Naive thymus-derived CD4-positive, alpha-beta T cell (primary cell): ENCODE measurements at regions of chr2 and their contacts with region 1.

Region 1: GRCh38 chr2:202375609-202376408 is at the start of gene BMPR2:
- DNase-seq: peak; percentile 68 to 94 (median 81)
- ATAC-seq: peak; percentile 90
- H3K4me3 ChIP-seq: peak within 1 kb of the TSS; percentile 95
- H3K4me3 Mint-ChIP-seq: peak within 1 kb of the TSS; percentile 94 to 100 (median 98)
- H3K27ac ChIP-seq: peak within 1 kb of the TSS; percentile 81
- H3K27ac Mint-ChIP-seq: peak within 1 kb of the TSS; percentile 82 to 98 (median 92)
- H3K4me1 ChIP-seq: peaks cover 0 to 3% of the 10 kb centered on the region in 2 donors
- H3K4me1 Mint-ChIP-seq: peaks cover 13 to 41% (median 29%) of the 10 kb centered on the region in 7 donors
- H3K27me3 ChIP-seq: no peaks in the 10 kb centered on the region
- H3K27me3 Mint-ChIP-seq: peaks cover 0 to 28% (median 0%) of the 10 kb centered on the region in 5 donors
- total RNA-seq, gene BMPR2: 8.0 to 33.1 (median 15.2) TPM

Region 2: DNA sequence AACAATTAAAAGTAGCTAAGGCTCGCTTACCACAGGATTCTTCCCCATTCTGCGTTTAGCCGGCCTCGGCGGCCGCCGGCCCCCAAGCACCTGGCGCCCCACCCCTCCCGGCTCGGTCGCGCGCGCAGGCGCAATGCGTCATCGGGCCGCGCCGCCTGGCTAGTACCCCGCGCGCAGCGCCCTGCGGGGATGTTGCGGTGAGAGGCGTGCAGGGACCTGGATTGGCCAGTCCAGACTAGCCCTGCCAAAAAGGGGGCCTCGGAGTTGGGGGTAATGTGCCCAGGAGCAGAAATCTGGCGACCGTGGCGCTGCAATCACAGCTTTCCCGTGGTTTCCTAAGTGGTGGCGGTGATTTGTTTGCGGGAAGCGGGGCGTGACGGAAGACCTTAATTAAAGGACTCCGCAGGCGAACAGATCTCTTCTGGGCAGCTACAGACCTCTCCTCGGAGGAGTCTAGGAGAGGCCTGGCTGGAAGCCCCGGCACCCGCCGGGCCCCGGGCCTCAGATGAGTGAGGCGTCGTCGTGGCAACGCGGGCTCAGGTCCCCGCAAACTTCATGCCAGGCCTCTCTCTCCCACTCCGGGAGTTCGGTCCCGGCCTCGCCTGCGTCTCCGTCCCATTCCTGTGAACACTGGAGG is 733.1 kb before region 1 on chr2:
- CTCF ChIA-PET with region 1: no interaction called
- POLR2A ChIA-PET with region 1: no interaction called
- intact Hi-C with region 1: loop called in 1 of 2 experiments (anchors 5 kb)
- DNase-seq: peak; percentile 81 to 94 (median 92)
- ATAC-seq: peak; percentile 94
- H3K4me3 ChIP-seq: peak overlapping the region; percentile 95
- H3K4me3 Mint-ChIP-seq: peak overlapping the region; percentile 86 to 99 (median 96)
- H3K27ac ChIP-seq: peak overlapping the region; percentile 87
- H3K27ac Mint-ChIP-seq: peak overlapping the region; percentile 76 to 100 (median 97)
- H3K4me1 ChIP-seq: peaks cover 3 to 5% of the 10 kb centered on the region in 2 donors
- H3K4me1 Mint-ChIP-seq: peaks cover 5 to 21% (median 12%) of the 10 kb centered on the region in 7 donors
- H3K27me3 ChIP-seq: no peaks in the 10 kb centered on the region
- H3K27me3 Mint-ChIP-seq: peaks cover 0 to 4% (median 0%) of the 10 kb centered on the region in 5 donors

Region 3: DNA sequence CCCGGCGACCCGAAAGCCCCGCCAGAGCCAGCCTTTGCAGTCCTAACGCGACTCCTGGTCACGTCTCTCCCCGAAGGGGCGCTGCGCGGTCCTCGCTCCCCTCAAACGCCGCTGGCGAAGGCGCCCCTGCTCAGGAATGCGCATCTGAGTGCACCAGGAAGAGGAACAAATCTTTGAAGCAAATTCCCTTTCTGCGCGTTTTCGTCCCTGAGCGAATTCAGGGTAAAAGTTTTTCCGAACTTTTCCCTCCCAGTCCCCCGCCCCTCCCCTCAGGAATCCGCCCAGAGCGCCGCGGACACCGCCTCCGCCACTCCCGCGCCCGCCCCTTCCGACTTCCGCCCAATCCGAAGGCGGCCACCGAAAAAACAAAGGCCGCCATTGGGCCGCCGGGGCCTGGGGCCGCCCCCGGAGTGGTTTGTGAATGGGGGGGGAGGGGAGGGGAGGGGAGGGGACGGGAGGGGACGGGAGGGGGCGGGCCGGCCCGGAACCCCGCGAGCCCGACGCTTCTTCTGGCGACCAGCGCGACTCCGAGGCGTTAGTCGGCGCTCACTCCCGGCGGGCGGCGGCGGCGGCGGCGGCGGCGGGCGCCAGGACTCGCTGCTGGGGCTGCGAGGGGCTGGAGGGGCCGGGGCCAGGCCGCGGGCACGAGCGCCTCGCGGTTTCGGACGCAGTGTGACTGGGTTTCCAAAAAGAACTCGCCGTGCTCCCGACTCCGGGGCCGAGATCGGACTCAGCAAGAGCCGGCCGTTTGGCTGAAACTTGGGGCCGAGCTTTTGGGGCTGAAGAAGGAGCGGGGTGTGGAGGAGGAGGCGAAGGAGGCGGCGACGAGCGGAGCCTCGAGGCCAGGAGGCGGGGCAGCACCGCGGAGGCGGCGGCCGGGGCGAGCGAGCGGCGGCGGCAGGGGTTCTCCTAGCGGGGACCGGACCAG is 342.2 kb before region 1 on chr2 and contains the start of gene FZD7:
- CTCF ChIA-PET with region 1: no interaction called
- POLR2A ChIA-PET with region 1: no interaction called
- intact Hi-C with region 1: loop called in 1 of 2 experiments (anchors 5 kb)
- DNase-seq: peak; percentile 70 to 87 (median 81)
- ATAC-seq: peak; percentile 92
- H3K4me3 ChIP-seq: peak within 1 kb of the TSS; percentile 91
- H3K4me3 Mint-ChIP-seq: peak within 1 kb of the TSS in 9 of 10 donors; percentile 87 to 96 (median 92)
- H3K27ac ChIP-seq: peak within 1 kb of the TSS; percentile 44
- H3K27ac Mint-ChIP-seq: peak within 1 kb of the TSS in 8 of 9 donors; percentile 46 to 83 (median 72)
- H3K4me1 ChIP-seq: peaks cover 9 to 11% of the 10 kb centered on the region in 2 donors
- H3K4me1 Mint-ChIP-seq: peaks cover 6 to 17% (median 14%) of the 10 kb centered on the region in 7 donors
- H3K27me3 ChIP-seq: peaks cover 6 to 22% of the 10 kb centered on the region in 2 donors
- H3K27me3 Mint-ChIP-seq: peaks cover 0 to 45% (median 7%) of the 10 kb centered on the region in 5 donors
- total RNA-seq, gene FZD7: 0.27 to 0.99 (median 0.43) TPM

Region 4: DNA sequence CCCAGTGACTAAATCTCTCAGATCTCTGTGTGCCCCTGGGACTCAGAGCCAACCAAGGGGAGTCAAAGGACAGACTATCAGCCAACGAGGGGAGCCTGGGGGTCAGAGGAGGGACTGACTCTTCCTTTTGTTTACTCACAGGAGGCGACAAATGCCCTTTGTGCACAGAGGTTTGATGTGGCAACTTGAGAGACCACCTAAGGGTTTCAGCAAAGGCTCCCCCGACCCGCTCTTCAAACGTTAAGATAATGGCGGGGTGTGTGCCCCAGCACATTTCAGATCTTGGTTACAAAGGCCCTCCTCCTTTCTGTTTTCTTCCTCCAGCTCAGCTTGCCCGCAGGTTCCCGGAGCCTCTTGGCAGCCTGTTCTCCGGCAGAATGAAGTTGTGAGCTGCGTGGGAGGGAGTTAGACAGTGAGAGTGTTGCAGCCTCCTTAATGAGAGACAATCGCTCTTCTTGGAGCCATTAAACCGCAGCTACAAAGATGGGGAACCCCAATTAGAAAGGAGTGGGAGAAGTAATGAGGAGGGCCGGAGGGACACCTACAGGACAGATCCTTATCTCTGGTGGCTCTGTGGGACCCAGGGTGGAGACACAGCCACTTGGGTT is 226.6 kb before region 1 on chr2:
- CTCF ChIA-PET with region 1: no interaction called
- POLR2A ChIA-PET with region 1: no interaction called
- intact Hi-C with region 1: no loop called
- DNase-seq: no peak
- ATAC-seq: no peak
- H3K4me3 ChIP-seq: no peak overlapping the region
- H3K4me3 Mint-ChIP-seq: no peak overlapping the region
- H3K27ac ChIP-seq: no peak overlapping the region
- H3K27ac Mint-ChIP-seq: peak overlapping the region in 1 of 9 donors; percentile 37
- H3K4me1 ChIP-seq: no peaks in the 10 kb centered on the region
- H3K4me1 Mint-ChIP-seq: peaks cover 0 to 4% (median 0%) of the 10 kb centered on the region in 7 donors
- H3K27me3 ChIP-seq: no peaks in the 10 kb centered on the region
- H3K27me3 Mint-ChIP-seq: peaks cover 4 to 33% (median 11%) of the 10 kb centered on the region in 5 donors

Region 5: DNA sequence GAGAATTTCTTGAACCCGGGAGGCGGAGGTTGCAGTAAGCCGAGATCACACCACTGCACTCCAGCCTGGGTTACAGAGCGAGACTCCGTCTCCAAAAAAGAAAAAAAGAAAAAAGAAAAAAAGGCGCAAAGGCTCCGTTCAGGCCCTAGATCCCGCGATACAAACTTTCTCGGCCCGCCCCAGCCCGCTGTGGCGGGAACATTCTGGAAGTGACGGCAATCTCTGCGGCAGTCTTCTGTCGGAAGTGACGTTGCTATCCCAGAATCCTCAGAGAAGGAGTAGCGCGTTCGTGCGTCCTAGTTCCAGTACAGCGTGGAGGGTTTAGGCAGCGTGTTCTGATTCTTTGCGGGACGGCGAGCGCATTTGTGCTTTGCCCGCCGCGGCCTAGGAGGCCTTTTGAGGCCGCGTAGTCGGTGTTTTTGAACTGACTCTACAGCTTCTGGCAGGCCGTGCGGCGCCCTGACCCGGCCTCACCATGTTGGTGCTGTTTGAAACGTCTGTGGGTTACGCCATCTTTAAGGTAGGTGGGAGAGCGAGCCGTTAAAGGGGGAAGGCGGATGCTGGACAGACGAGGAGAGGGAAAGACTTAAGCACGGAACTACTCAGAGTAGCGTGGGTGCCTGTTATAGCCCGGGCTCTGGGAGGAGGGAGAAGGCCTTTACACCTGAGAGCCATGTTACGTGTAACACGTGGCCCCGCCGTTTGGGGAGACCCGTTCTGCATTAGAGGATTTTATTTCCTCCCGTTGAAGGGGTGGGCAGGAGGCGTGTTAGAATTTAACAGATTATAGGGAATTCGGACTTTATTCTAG is 110.1 kb before region 1 on chr2 and contains the start of gene NOP58:
- CTCF ChIA-PET with region 1: no interaction called
- POLR2A ChIA-PET with region 1: interaction called, 3 read pairs
- intact Hi-C with region 1: loop called (anchors 1 kb)
- DNase-seq: peak; percentile 69 to 96 (median 93)
- ATAC-seq: peak; percentile 90
- H3K4me3 ChIP-seq: peak within 1 kb of the TSS; percentile 93
- H3K4me3 Mint-ChIP-seq: peak within 1 kb of the TSS in 9 of 10 donors; percentile 53 to 71 (median 64)
- H3K27ac ChIP-seq: peak within 1 kb of the TSS; percentile 92
- H3K27ac Mint-ChIP-seq: peak within 1 kb of the TSS in 6 of 9 donors; percentile 4 to 83 (median 76)
- H3K4me1 ChIP-seq: peaks cover 17 to 34% of the 10 kb centered on the region in 2 donors
- H3K4me1 Mint-ChIP-seq: peaks cover 11 to 27% (median 21%) of the 10 kb centered on the region in 7 donors
- H3K27me3 ChIP-seq: no peaks in the 10 kb centered on the region
- H3K27me3 Mint-ChIP-seq: no peaks in the 10 kb centered on the region
- total RNA-seq, gene NOP58: 105 to 259 (median 110) TPM

Region 6: DNA sequence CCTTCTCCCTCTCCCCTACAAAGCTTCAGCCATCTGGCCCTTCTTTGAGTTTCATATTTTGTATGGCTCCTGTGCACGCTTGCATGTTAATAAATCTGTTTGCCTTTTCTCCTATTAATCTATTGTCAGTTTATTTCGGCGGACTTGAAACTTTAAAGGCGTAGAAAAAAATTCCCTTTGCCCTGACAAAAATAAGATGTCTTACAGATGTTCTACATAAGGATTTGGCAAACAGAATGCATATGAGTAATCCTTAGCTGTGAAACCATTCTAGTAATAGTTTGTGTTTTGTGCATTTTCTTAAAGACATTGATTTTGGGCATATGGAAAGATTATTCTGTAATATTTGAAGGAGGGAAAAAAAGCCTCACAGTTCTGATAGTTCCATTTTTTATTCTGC is 14.7 kb before region 1 on chr2:
- CTCF ChIA-PET with region 1: no interaction called
- POLR2A ChIA-PET with region 1: no interaction called
- intact Hi-C with region 1: no loop called
- DNase-seq: no peak
- ATAC-seq: no peak
- H3K4me3 ChIP-seq: no peak overlapping the region
- H3K4me3 Mint-ChIP-seq: no peak overlapping the region
- H3K27ac ChIP-seq: no peak overlapping the region
- H3K27ac Mint-ChIP-seq: peak overlapping the region in 2 of 9 donors; percentile 5 to 41
- H3K4me1 ChIP-seq: no peaks in the 10 kb centered on the region
- H3K4me1 Mint-ChIP-seq: no peaks in the 10 kb centered on the region
- H3K27me3 ChIP-seq: no peaks in the 10 kb centered on the region
- H3K27me3 Mint-ChIP-seq: peaks cover 0 to 2% (median 0%) of the 10 kb centered on the region in 5 donors

Region 7: DNA sequence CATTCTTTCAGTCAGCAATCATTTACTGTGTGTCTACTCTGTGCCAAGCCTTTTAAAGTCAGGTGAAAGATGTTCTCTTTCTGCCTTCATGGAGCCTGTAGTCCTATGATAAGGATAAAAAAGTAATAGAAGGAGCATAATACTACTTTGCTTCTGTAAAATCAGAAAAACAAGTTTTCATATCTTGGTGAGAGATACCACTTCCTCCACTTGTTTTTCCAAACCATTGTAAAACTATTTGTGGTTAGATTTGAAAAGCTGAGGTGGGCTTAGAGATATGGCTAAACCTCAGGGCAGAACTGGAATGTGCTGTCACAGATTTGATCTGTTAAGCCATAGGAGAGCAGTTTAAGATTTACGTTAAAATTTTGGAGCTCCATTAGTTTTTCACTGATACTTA is 154.2 kb after region 1 on chr2:
- CTCF ChIA-PET with region 1: no interaction called
- POLR2A ChIA-PET with region 1: interaction called, 3 read pairs
- intact Hi-C with region 1: loop called in 1 of 2 experiments (anchors 1 kb)
- DNase-seq: peak in 4 of 9 donors; percentile 16 to 35 (median 24)
- ATAC-seq: no peak
- H3K4me3 ChIP-seq: no peak overlapping the region
- H3K4me3 Mint-ChIP-seq: peak overlapping the region in 9 of 10 donors; percentile 9 to 79 (median 70)
- H3K27ac ChIP-seq: peak overlapping the region; percentile 62
- H3K27ac Mint-ChIP-seq: peak overlapping the region in 8 of 9 donors; percentile 44 to 86 (median 80)
- H3K4me1 ChIP-seq: peaks cover 15 to 23% of the 10 kb centered on the region in 2 donors
- H3K4me1 Mint-ChIP-seq: peaks cover 10 to 46% (median 33%) of the 10 kb centered on the region in 7 donors
- H3K27me3 ChIP-seq: no peaks in the 10 kb centered on the region
- H3K27me3 Mint-ChIP-seq: no peaks in the 10 kb centered on the region

Region 8: GRCh38 chr2:202718614-202719013 is 342.8 kb after region 1 on chr2:
- CTCF ChIA-PET with region 1: no interaction called
- POLR2A ChIA-PET with region 1: no interaction called
- intact Hi-C with region 1: no loop called
- DNase-seq: no peak
- ATAC-seq: no peak
- H3K4me3 ChIP-seq: no peak overlapping the region
- H3K4me3 Mint-ChIP-seq: peak overlapping the region in 6 of 10 donors; percentile 2 to 39 (median 36)
- H3K27ac ChIP-seq: no peak overlapping the region
- H3K27ac Mint-ChIP-seq: peak overlapping the region in 6 of 9 donors; percentile 2 to 72 (median 24)
- H3K4me1 ChIP-seq: peaks cover 0 to 16% of the 10 kb centered on the region in 2 donors
- H3K4me1 Mint-ChIP-seq: peaks cover 0 to 74% (median 63%) of the 10 kb centered on the region in 7 donors
- H3K27me3 ChIP-seq: no peaks in the 10 kb centered on the region
- H3K27me3 Mint-ChIP-seq: no peaks in the 10 kb centered on the region

Region 9: DNA sequence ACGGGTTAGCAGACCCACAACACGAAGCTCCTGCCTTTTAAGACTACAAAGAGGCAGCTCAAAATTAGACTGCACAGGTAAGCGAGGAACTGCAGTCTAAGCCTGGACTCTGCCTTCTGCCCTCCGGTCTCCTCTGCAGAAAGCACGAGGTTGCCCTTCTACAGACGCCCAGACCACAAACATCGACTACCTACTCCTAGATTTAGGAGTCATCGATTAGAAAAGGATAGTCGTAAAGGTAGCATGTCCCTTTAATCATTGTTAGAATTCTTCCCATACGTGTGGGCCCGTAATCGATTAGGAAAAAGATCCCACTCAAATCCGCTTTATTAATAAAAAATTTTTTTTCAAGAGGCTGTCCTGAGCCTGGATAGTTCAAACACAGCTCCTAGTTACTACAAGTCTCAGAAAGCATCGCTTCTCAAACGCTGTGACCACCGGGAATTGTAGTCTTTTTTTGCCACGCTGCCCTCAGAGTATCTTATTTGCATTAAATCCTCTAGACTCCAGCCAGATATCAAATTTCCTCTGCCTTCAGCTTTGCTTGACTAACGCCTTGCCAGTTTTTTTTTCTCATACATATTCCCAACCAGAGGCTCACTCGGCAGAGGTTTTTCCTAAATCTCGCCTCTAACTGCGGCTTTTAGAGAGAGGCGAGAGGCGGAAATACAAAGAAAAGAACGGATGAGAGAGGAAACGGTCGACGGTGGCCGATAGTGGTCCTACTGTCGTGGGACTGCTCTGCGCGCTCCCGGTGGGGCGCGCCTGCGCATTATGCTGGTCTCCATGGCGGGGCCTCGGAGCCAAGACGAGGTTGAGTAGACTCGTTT is 535.9 kb after region 1 on chr2 and contains the starts of genes CARF and WDR12:
- CTCF ChIA-PET with region 1: no interaction called
- POLR2A ChIA-PET with region 1: no interaction called
- intact Hi-C with region 1: loop called (anchors 1 to 5 kb)
- DNase-seq: peak; percentile 81 to 93 (median 89)
- ATAC-seq: peak; percentile 93
- H3K4me3 ChIP-seq: peak within 1 kb of the TSS; percentile 82
- H3K4me3 Mint-ChIP-seq: peak within 1 kb of the TSS; percentile 90 to 100 (median 98)
- H3K27ac ChIP-seq: peak within 1 kb of the TSS; percentile 79
- H3K27ac Mint-ChIP-seq: peak within 1 kb of the TSS; percentile 93 to 99 (median 97)
- H3K4me1 ChIP-seq: peaks cover 4 to 11% of the 10 kb centered on the region in 2 donors
- H3K4me1 Mint-ChIP-seq: peaks cover 24 to 50% (median 34%) of the 10 kb centered on the region in 7 donors
- H3K27me3 ChIP-seq: no peaks in the 10 kb centered on the region
- H3K27me3 Mint-ChIP-seq: no peaks in the 10 kb centered on the region
- total RNA-seq, gene CARF: 10.2 to 31.2 (median 15.4) TPM
- total RNA-seq, gene WDR12: 17.2 to 50.4 (median 20.8) TPM

Region 10: DNA sequence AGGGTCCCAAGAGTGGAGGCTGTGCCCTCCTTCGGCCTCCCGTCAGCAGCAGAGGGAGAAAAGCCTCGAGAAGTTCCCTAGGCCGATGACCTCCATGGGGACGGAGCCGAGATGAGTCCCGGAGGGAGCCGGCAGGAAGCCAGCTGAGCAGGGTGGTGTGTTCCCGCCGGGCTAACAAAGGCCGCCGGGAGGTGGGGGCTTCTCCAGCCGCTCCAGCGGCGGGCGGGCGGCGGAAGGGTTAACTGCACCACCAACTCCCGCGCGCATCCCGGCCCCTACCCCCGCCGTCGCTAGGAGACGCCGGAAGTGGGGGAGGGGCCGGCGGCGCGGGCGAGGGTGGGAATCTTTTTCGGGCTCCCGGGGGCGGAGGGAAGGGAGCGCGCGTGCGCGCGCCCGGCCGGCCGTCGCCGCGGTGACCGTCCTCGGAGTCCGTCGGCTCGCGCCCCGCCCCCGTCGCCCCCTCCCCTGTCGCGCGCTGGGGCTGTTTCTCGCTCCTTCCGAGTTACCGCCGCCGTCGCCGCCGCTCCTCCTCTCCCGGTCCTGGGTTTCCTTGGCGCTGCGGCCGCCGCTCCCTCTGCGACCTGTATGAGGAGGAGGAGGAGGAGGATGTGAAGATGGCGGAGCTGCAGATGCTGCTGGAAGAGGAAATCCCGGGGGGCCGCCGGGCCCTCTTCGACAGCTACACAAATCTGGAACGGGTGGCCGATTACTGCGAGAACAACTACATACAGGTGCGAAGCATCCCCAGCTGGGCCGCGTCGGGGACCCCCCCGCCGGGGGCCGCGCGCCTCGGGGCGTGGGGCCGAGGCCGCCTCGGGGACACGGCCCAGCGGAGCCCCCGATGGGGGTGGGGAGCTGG is 952.3 kb after region 1 on chr2 and contains the start of gene ABI2:
- CTCF ChIA-PET with region 1: no interaction called
- POLR2A ChIA-PET with region 1: no interaction called
- intact Hi-C with region 1: loop called in 1 of 2 experiments (anchors 5 kb)
- DNase-seq: peak; percentile 27 to 81 (median 51)
- ATAC-seq: peak; percentile 71
- H3K4me3 ChIP-seq: peak within 1 kb of the TSS; percentile 84
- H3K4me3 Mint-ChIP-seq: peak within 1 kb of the TSS; percentile 85 to 97 (median 93)
- H3K27ac ChIP-seq: peak within 1 kb of the TSS; percentile 72
- H3K27ac Mint-ChIP-seq: peak within 1 kb of the TSS; percentile 72 to 96 (median 90)
- H3K4me1 ChIP-seq: peaks cover 7 to 15% of the 10 kb centered on the region in 2 donors
- H3K4me1 Mint-ChIP-seq: peaks cover 21 to 40% (median 33%) of the 10 kb centered on the region in 7 donors
- H3K27me3 ChIP-seq: no peaks in the 10 kb centered on the region
- H3K27me3 Mint-ChIP-seq: no peaks in the 10 kb centered on the region
- total RNA-seq, gene ABI2: 19.5 to 41.5 (median 28.2) TPM